ENCODE measurements at regions of chr11 and their contacts with region 1.

Region 1: DNA sequence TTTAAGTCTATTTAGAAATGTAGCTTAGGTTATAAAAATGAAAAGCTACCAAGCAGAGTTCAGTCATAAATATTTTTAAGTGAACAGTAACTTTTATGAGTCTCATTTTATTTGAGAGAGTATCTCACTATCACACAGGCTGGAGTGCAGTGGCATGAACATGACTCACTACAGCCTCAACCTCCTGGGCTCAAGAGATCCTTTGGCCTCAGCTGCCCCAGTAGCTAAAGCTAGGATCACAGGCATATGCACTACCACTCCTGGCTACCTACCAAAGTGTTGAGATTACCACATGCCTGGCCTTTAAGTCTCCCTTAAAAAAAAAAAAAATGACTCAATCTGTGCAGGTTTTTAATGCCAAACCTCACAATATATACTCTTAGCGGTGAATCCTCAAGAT is 34.7 kb upstream of the CLNS1A start:
- DNase-seq: no peak
- ATAC-seq: no peak
- H3K4me3 ChIP-seq: no peak overlapping the region
- H3K4me3 Mint-ChIP-seq: no peak overlapping the region
- H3K27ac ChIP-seq: no peak overlapping the region
- H3K27ac Mint-ChIP-seq: peak overlapping the region in 1 of 9 donors; percentile 10
- H3K4me1 ChIP-seq: no peaks in the 10 kb centered on the region
- H3K4me1 Mint-ChIP-seq: peaks cover 0 to 3% (median 0%) of the 10 kb centered on the region in 7 donors
- H3K27me3 ChIP-seq: no peaks in the 10 kb centered on the region
- H3K27me3 Mint-ChIP-seq: no peaks in the 10 kb centered on the region

Region 2: GRCh38 chr11:77687085-77687484 is 14.8 kb after region 1 on chr11:
- CTCF ChIA-PET with region 1: interaction called, 3 read pairs
- POLR2A ChIA-PET with region 1: interaction called, 3 read pairs
- intact Hi-C with region 1: loop called in 1 of 2 experiments (anchors 1 kb)
- DNase-seq: no peak
- ATAC-seq: no peak
- H3K4me3 ChIP-seq: no peak overlapping the region
- H3K4me3 Mint-ChIP-seq: no peak overlapping the region
- H3K27ac ChIP-seq: no peak overlapping the region
- H3K27ac Mint-ChIP-seq: peak overlapping the region in 2 of 9 donors; percentile 47 to 57
- H3K4me1 ChIP-seq: no peaks in the 10 kb centered on the region
- H3K4me1 Mint-ChIP-seq: peaks cover 0 to 3% (median 0%) of the 10 kb centered on the region in 7 donors
- H3K27me3 ChIP-seq: no peaks in the 10 kb centered on the region
- H3K27me3 Mint-ChIP-seq: no peaks in the 10 kb centered on the region

Region 3: DNA sequence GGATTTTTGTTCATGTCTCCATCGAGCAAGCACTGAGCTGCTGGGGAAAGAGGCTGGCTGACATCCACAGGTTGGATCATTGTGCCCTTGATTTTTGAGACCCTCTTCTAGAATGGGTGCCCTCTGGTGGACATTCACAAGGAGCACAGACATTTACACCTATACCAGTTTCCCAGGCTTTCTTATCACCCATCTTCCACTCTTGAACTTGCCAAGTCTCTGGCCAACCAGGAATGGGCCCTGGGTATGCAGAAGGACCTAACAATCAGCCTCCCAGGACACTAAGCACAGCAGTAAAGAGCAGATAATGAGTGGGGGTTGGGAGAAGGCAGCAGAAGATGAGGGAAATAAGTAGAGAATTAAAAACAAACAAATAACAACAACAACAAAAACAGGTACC is 327.9 kb after region 1 on chr11:
- CTCF ChIA-PET with region 1: no interaction called
- POLR2A ChIA-PET with region 1: no interaction called
- intact Hi-C with region 1: no loop called
- DNase-seq: peak in 8 of 9 donors; percentile 15 to 60 (median 42)
- ATAC-seq: peak; percentile 86
- H3K4me3 ChIP-seq: no peak overlapping the region
- H3K4me3 Mint-ChIP-seq: no peak overlapping the region
- H3K27ac ChIP-seq: no peak overlapping the region
- H3K27ac Mint-ChIP-seq: no peak overlapping the region
- H3K4me1 ChIP-seq: peaks cover 5 to 7% of the 10 kb centered on the region in 2 donors
- H3K4me1 Mint-ChIP-seq: peaks cover 0 to 6% (median 4%) of the 10 kb centered on the region in 7 donors
- H3K27me3 ChIP-seq: no peaks in the 10 kb centered on the region
- H3K27me3 Mint-ChIP-seq: peaks cover 0 to 17% (median 0%) of the 10 kb centered on the region in 5 donors